Activated naive CD4-positive, alpha-beta T cell treated with anti-CD3 and anti-CD28 coated beads for 36 hours (primary cell): ENCODE measurements at regions of chr2 and their contacts with region 1.

Region 1: GRCh38 chr2:145744541-145745386 is 1224.8 kb upstream of the ZEB2 start:
- DNase-seq: no peak
- H3K4me3 Mint-ChIP-seq: no peak overlapping the region
- H3K27ac Mint-ChIP-seq: no peak overlapping the region
- H3K4me1 Mint-ChIP-seq: peaks cover 8% of the 10 kb centered on the region
- H3K27me3 Mint-ChIP-seq: no peaks in the 10 kb centered on the region

Region 2: DNA sequence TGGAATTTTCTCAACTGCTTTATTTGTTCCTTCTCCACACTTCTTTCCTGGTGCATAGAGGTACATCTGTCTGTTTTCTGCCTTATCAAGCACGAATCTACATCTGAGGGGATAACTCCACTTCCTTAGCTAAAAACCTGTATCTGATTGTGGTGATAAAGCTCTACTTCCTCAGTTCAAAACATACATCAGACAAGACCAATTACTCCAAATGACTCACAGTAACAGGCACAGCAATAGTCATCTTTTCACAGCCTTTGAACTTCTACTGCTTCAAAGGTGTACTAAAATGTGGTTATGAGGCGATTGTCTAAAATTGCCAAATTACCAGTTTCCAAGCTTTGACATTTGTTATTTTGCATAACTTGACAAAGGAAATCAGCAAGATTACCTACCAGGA is 421.3 kb before region 1 on chr2:
- CTCF ChIA-PET with region 1: no interaction called
- intact Hi-C with region 1: loop called (anchors 10 kb)
- DNase-seq: no peak
- H3K4me3 Mint-ChIP-seq: no peak overlapping the region
- H3K27ac Mint-ChIP-seq: no peak overlapping the region
- H3K4me1 Mint-ChIP-seq: peaks cover 9% of the 10 kb centered on the region
- H3K27me3 Mint-ChIP-seq: no peaks in the 10 kb centered on the region

Region 3: DNA sequence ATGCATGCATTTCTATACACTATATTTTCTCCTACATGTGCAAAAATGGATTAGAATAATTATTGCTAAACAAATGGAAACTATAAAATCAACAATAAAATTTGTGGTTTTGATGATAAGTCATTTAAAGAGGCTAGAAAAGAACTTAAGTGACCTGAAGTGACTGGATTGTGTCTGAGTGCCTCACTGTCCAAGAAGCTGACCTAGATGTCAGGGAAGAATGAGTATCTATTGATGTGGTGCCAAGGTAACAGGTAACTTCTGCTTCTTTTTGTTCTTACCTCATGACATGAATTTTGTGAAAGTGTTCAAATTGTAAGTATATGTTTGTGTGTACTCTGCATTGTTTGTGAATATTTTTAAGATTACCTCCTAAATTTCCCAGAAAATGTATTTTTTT is 476.2 kb after region 1 on chr2:
- CTCF ChIA-PET with region 1: no interaction called
- intact Hi-C with region 1: no loop called
- DNase-seq: no peak
- H3K4me3 Mint-ChIP-seq: no peak overlapping the region
- H3K27ac Mint-ChIP-seq: no peak overlapping the region
- H3K4me1 Mint-ChIP-seq: no peaks in the 10 kb centered on the region
- H3K27me3 Mint-ChIP-seq: no peaks in the 10 kb centered on the region